Activated CD8-positive, alpha-beta T cell treated with anti-CD3 and anti-CD28 coated beads for 36 hours (primary cell): ENCODE measurements at regions of chr6 and their contacts with region 1.

Region 1: DNA sequence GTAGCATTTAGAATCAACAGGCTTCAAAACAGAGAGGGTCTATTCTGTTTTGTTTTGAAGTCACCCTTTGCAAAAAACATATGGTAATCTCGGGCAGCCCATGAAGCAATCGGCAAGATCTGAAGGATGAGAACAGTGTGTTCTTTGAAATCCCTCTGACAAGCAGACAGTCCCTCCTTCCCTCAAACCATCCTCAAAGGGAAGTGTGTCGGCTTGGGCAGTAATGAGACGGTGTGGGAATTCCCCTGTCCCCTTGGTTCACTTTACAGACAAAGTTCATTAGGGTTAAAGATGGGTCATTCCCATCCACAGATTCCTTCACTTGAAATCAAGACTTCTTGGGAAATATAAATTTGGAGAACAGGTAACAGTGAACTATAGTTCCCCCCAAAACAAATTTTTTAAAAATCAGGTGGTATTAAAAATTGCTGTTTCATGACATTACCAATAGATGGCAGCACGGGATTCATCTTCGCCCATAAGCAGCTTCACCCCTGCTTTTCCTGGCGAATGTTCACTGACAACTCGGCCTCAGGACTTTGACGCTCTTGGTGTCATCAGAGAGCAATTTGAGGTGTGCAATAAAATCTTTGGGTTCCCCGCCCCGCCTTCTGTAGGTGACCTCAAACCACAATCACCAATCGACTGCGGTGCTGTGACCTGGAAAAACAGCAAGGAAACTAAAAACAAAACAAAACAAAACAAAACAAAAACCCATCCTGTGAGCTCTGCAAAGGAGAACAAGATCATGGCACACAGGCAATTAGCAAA is 159.3 kb upstream of the TNFAIP3 start:
- DNase-seq: peak; percentile 89
- ATAC-seq: peak; percentile 67
- H3K4me3 Mint-ChIP-seq: peak overlapping the region; percentile 67
- H3K27ac Mint-ChIP-seq: peak overlapping the region; percentile 89
- H3K4me1 Mint-ChIP-seq: peaks cover 65% of the 10 kb centered on the region
- H3K27me3 Mint-ChIP-seq: no peaks in the 10 kb centered on the region
- CTCF ChIP-seq: peak; percentile 77

Region 2: DNA sequence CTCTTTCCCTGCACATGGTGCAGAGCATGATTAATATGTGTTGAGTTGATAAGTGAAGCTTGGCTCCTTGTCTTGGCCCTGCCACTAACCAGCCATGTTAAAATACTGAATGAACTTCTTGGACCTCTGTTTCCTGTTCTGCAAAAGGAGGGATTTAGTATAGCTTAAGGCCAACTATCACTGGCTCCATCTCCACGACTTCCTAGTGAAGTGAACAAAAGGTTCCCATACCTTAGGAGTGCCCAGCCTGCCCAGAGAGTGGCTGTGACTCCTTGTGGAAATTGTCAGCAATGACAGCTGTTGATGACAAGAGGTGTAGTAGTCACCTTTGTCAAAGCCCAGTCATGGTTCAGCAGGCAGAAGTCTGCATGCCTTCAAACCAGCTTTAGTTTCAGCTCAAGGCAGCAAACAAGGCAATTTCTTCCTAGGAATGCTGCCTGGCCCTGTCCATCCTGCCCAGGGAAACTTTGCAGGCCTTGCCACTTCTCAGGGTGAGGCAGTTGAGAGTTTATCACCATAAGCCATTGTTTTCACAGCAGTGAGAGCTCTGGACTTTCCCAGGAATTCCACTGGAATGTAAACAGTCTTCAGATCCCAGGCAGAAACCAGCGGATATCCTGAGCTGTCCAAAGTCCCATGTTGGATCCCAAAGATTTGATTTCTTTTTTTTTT is 10.4 kb before region 1 on chr6:
- CTCF ChIA-PET with region 1: interaction called, 16 read pairs
- POLR2A ChIA-PET with region 1: interaction called, 3 read pairs
- intact Hi-C with region 1: no loop called
- DNase-seq: no peak
- ATAC-seq: peak; percentile 29
- H3K4me3 Mint-ChIP-seq: no peak overlapping the region
- H3K27ac Mint-ChIP-seq: peak overlapping the region; percentile 55
- H3K4me1 Mint-ChIP-seq: peaks cover 43% of the 10 kb centered on the region
- H3K27me3 Mint-ChIP-seq: peaks cover 8% of the 10 kb centered on the region
- CTCF ChIP-seq: no peak

Region 3: DNA sequence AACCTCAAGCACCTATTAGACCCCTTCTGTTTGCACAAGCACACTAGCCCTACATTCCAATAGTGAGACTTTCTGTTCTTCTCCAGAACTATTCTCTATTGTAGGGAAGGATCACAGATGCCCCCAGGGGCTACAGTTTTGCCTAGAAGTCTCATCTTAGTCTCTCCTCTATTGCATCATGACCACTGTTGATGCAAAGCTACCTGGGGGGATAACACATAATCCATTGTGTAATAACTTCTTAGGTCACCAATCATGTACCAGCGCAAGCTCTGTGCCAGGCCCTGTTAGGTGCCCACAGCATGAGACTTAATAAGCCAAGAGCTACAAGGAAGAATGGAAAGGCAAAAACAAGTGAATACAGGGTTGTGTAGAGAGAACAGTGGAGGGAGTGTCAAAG is 61.2 kb after region 1 on chr6:
- CTCF ChIA-PET with region 1: no interaction called
- POLR2A ChIA-PET with region 1: no interaction called
- intact Hi-C with region 1: no loop called
- DNase-seq: no peak
- ATAC-seq: no peak
- H3K4me3 Mint-ChIP-seq: no peak overlapping the region
- H3K27ac Mint-ChIP-seq: no peak overlapping the region
- H3K4me1 Mint-ChIP-seq: peaks cover 16% of the 10 kb centered on the region
- H3K27me3 Mint-ChIP-seq: no peaks in the 10 kb centered on the region
- CTCF ChIP-seq: no peak

Region 4: GRCh38 chr6:137799950-137800568 is 92.3 kb after region 1 on chr6:
- CTCF ChIA-PET with region 1: interaction called, 56 read pairs
- POLR2A ChIA-PET with region 1: no interaction called
- intact Hi-C with region 1: no loop called
- DNase-seq: peak; percentile 85
- ATAC-seq: peak; percentile 77
- H3K4me3 Mint-ChIP-seq: no peak overlapping the region
- H3K27ac Mint-ChIP-seq: peak overlapping the region; percentile 88
- H3K4me1 Mint-ChIP-seq: peaks cover 72% of the 10 kb centered on the region
- H3K27me3 Mint-ChIP-seq: no peaks in the 10 kb centered on the region
- CTCF ChIP-seq: peak; percentile 74

Region 5: DNA sequence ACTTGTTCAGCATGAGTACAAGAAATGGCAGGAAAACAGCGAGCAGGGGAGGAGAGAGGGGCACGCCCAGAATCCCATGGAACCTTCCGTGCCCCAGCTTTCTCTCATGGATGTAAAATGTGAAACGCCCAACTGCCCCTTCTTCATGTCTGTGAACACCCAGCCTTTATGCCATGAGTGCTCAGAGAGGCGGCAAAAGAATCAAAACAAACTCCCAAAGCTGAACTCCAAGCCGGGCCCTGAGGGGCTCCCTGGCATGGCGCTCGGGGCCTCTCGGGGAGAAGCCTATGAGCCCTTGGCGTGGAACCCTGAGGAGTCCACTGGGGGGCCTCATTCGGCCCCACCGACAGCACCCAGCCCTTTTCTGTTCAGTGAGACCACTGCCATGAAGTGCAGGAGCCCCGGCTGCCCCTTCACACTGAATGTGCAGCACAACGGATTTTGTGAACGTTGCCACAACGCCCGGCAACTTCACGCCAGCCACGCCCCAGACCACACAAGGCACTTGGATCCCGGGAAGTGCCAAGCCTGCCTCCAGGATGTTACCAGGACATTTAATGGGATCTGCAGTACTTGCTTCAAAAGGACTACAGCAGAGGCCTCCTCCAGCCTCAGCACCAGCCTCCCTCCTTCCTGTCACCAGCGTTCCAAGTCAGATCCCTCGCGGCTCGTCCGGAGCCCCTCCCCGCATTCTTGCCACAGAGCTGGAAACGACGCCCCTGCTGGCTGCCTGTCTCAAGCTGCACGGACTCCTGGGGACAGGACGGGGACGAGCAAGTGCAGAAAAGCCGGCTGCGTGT is 170.9 kb after region 1 on chr6:
- CTCF ChIA-PET with region 1: interaction called, 39 read pairs
- POLR2A ChIA-PET with region 1: interaction called, 4 read pairs
- intact Hi-C with region 1: no loop called
- DNase-seq: no peak
- ATAC-seq: no peak
- H3K4me3 Mint-ChIP-seq: peak overlapping the region; percentile 98
- H3K27ac Mint-ChIP-seq: peak overlapping the region; percentile 95
- H3K4me1 Mint-ChIP-seq: peaks cover 90% of the 10 kb centered on the region
- H3K27me3 Mint-ChIP-seq: no peaks in the 10 kb centered on the region
- CTCF ChIP-seq: no peak

Region 6: DNA sequence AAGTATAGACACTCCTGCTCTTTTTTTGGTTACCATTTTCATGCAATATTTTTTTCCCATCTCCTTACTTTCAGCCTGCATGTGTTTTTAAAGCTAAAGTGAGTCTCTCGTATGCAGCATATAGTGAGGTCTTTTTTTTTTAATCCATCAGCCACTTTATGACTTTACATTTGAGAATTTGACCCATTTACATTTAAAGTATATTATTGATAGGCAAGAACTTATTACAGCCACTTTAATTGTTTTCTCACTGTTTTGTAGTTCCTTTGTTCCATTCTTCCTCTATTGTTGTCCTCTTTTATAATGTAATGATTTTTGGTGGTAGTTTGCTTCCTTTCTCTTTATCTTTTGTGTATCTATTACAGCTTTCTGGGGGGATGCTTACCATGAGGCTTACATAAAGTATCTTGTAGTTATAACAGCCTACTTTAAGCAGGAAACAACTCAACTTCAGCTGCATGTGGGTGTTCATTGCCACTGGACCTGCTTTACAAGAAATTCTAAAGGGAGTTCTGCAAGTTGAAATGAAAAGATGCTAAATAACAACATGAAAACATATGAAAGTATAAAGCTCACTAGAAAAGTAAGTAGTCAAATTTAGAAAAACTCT is 231.1 kb after region 1 on chr6:
- CTCF ChIA-PET with region 1: interaction called, 28 read pairs
- POLR2A ChIA-PET with region 1: interaction called, 3 read pairs
- intact Hi-C with region 1: loop called (anchors 2 kb)
- DNase-seq: no peak
- ATAC-seq: no peak
- H3K4me3 Mint-ChIP-seq: peak overlapping the region; percentile 39
- H3K27ac Mint-ChIP-seq: peak overlapping the region; percentile 92
- H3K4me1 Mint-ChIP-seq: peaks cover 44% of the 10 kb centered on the region
- H3K27me3 Mint-ChIP-seq: no peaks in the 10 kb centered on the region
- CTCF ChIP-seq: no peak

Region 7: DNA sequence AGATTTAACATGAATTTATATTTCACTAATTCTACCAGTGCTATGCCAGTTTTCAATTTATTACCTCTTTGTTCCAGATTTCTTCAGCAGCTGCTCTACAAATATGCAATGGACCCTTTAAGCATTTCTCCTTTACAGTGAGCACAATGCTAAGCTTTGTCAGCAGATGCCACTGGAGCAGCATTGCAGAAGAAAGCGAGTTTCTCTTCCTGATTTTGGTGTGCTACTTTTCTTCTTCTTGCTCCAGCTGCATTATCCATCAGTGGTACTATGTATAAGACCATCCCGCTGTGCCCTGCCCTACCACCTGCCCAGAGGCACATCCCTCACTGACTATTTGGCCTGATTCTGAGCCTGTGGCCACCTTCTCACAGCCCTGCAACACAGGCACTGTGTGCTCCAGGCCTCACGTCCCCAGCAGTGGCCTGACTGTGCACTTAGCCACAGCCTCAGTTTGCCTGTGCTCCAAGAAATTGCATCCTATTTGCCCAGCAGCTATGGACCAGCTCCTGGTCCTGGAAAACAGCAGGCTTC is 243.4 kb after region 1 on chr6:
- CTCF ChIA-PET with region 1: interaction called, 26 read pairs
- POLR2A ChIA-PET with region 1: no interaction called
- intact Hi-C with region 1: no loop called
- DNase-seq: no peak
- ATAC-seq: no peak
- H3K4me3 Mint-ChIP-seq: no peak overlapping the region
- H3K27ac Mint-ChIP-seq: peak overlapping the region; percentile 28
- H3K4me1 Mint-ChIP-seq: peaks cover 16% of the 10 kb centered on the region
- H3K27me3 Mint-ChIP-seq: no peaks in the 10 kb centered on the region
- CTCF ChIP-seq: no peak

Region 8: GRCh38 chr6:138001750-138002349 is 294.1 kb after region 1 on chr6:
- CTCF ChIA-PET with region 1: interaction called, 48 read pairs
- POLR2A ChIA-PET with region 1: no interaction called
- intact Hi-C with region 1: loop called (anchors 2 kb)
- DNase-seq: peak; percentile 85
- ATAC-seq: peak; percentile 56
- H3K4me3 Mint-ChIP-seq: no peak overlapping the region
- H3K27ac Mint-ChIP-seq: no peak overlapping the region
- H3K4me1 Mint-ChIP-seq: peaks cover 17% of the 10 kb centered on the region
- H3K27me3 Mint-ChIP-seq: no peaks in the 10 kb centered on the region
- CTCF ChIP-seq: peak; percentile 92